ENCODE measurements at regions of chr1 and their contacts with region 1.

Region 1: GRCh38 chr1:50368179-50369012 is 54.8 kb downstream of the DMRTA2 start:
- DNase-seq: peak; percentile 25
- H3K4me3 ChIP-seq: no peak overlapping the region
- H3K27ac ChIP-seq: no peak overlapping the region
- H3K4me1 ChIP-seq: no peaks in the 10 kb centered on the region
- CTCF ChIP-seq: peak; percentile 80

Region 2: GRCh38 chr1:50228871-50229384 is 139.5 kb before region 1 on chr1:
- CTCF ChIA-PET with region 1: no interaction called
- POLR2A ChIA-PET with region 1: no interaction called
- intact Hi-C with region 1: no loop called
- DNase-seq: no peak
- H3K4me3 ChIP-seq: no peak overlapping the region
- H3K27ac ChIP-seq: no peak overlapping the region
- H3K4me1 ChIP-seq: no peaks in the 10 kb centered on the region
- CTCF ChIP-seq: no peak

Region 3: GRCh38 chr1:50605186-50605875 is 236.9 kb after region 1 on chr1:
- CTCF ChIA-PET with region 1: no interaction called
- POLR2A ChIA-PET with region 1: interaction called, 3 read pairs
- intact Hi-C with region 1: loop called (anchors 1 kb)
- DNase-seq: peak; percentile 12
- H3K4me3 ChIP-seq: no peak overlapping the region
- H3K27ac ChIP-seq: no peak overlapping the region
- H3K4me1 ChIP-seq: no peaks in the 10 kb centered on the region
- CTCF ChIP-seq: peak; percentile 77

Region 4: DNA sequence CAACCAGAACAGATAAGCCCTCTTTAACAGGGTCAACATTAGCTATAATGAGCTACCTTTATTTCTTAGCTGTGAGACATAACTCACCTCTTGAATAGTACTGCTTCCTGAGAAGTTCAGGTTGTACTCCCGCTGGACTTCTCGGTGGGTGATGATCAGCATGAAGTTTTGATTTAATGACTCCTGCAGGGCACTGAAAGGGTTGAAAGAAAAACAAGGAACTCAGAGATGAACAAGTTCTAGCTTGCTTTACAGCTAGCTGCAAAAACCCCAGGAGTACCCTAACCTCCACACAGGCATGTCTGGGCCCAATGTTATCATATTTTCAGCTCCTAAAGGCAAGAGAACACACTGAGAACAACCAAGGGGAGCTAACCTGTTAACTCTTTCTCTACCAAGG is 337.3 kb after region 1 on chr1:
- CTCF ChIA-PET with region 1: no interaction called
- POLR2A ChIA-PET with region 1: no interaction called
- intact Hi-C with region 1: loop called (anchors 1 kb)
- DNase-seq: no peak
- H3K4me3 ChIP-seq: no peak overlapping the region
- H3K27ac ChIP-seq: no peak overlapping the region
- H3K4me1 ChIP-seq: no peaks in the 10 kb centered on the region
- CTCF ChIP-seq: no peak

Measured in OCI-LY7 (cell line).